ENCODE measurements at regions of chr19 and their contacts with region 1.

Region 1: DNA sequence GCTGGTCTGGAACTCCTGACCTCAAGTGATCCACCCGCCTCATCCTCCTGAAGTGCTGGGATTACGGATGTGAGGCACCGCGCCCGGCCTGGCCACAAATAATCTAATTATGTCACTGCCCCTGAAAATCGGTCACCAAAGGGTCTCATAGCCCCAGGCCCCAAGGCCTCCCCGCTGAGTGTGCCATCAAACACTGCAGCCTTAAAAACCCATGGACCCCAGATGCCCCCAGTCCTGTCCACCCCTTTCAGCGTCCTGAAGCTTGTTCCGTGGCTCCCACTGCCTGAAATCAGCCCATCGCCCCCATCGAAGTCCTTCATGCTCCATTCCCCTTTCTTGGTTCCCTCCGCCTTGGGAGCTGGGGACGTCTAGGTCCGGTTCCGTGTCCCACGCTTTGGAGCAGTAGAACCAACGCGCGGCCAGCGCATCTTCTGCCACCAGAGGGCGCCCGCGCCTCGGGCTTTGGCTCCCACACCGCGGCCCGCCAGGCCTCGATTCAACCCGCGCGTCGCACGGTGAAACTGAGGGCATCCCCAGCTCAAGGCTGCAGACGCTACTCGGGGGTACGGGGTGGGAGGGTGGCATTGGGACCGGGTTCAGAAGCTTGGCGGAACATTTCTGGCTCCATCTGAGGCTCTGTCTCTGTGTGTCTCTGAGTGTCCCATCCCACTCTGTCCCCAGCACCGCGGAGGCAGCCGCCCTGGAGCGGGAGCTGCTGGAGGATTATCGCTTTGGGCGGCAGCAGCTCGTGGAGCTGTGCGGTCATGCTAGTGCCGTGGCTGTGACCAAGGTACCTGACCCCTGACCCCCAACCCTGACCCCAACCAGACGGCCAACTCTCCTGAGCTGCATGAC is 3.5 kb downstream of the YJEFN3 start:
- DNase-seq: no peak
- H3K4me3 ChIP-seq: peak overlapping the region in 1 of 4 donors; percentile 19
- H3K27ac ChIP-seq: no peak overlapping the region
- H3K4me1 ChIP-seq: peaks cover 15 to 31% (median 24%) of the 10 kb centered on the region in 4 donors
- H3K27me3 ChIP-seq: peaks cover 0 to 5% (median 0%) of the 10 kb centered on the region in 4 donors
- CTCF ChIP-seq: peak; percentile 85 to 99 (median 93)
- EP300 ChIP-seq: no peak
- POLR2A ChIP-seq: no peak

Region 2: DNA sequence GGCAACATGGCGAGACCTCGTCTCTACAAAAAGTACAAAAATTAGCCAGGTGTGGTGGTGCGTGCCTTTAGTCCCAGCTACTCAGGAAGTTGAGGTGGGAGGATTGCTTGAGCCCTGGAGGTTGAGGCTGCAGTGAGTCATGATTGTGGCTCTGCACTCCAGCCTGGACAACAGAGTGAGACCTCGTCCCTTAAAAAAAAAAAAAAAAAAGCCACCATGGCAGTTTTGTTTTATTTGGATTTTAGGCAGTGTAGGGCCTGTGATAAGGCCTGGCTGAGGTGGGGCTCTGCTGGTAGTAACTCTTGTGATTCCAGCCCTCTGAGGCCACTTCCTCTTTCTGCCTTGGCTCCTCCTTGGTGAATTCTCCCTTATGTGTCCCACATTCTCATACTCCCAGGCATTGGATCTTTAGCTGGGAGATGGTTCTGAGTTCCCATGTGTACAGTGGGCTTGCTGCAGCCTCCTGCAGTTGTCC is 87.5 kb before region 1 on chr19:
- intact Hi-C with region 1: no loop called
- DNase-seq: no peak
- H3K4me3 ChIP-seq: no peak overlapping the region
- H3K27ac ChIP-seq: no peak overlapping the region
- H3K4me1 ChIP-seq: peaks cover 11 to 50% (median 21%) of the 10 kb centered on the region in 4 donors
- H3K27me3 ChIP-seq: no peaks in the 10 kb centered on the region
- CTCF ChIP-seq: no peak
- EP300 ChIP-seq: no peak
- POLR2A ChIP-seq: no peak

Region 3: DNA sequence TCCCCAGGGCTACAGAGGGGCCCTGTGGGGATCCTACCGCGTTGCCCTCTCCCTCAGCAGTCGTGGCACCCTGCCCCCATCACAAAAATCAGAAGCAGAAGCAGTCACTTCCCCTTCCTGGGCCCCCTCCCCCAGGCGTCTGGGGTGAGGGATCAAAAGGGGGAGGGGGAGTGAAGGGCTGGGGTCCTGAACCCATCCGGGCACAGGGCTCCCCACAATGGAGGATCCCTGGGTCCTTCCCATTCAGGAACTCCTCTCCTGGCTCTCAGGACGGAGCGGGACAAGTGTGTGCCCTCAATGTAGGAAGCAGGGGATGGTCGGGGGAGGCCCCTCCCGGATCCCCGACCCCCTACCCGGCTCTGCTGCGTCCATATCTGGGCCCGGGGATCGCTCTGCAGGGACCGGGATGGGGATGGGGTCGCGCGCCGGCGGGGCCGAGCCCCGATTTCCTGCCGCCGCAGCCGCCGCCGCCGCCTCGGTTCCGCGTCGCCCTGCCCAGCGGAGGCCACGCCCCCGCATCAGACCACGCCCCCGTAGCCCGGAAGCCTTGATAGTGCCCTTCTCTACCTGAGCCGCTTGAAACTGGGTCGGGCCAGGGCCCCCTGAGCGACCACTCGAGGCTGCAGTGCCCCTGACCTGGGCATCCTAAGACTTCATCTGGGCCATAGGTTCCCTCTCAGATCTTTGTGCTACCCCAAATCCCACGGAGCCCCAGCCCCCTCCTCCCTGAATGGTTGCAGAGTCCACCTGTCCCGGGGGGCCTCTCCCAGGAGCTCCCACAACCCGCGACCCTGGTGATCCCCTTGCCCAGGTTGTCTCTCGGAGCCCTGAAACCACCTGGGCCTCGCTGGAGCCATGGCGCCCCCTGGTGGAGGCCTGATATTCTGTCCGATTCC is 111.2 kb after region 1 on chr19 and contains the start of gene GMIP:
- intact Hi-C with region 1: loop called (anchors 2 kb)
- DNase-seq: peak; percentile 93
- H3K4me3 ChIP-seq: peak within 1 kb of the TSS; percentile 64 to 93 (median 75)
- H3K27ac ChIP-seq: peak within 1 kb of the TSS; percentile 42 to 57 (median 48)
- H3K4me1 ChIP-seq: peaks cover 15 to 20% (median 17%) of the 10 kb centered on the region in 4 donors
- H3K27me3 ChIP-seq: no peaks in the 10 kb centered on the region
- CTCF ChIP-seq: peak; percentile 70 to 86 (median 76)
- EP300 ChIP-seq: no peak
- POLR2A ChIP-seq: no peak
- total RNA-seq, gene GMIP: 6.9 to 15.9 (median 7.5) TPM

Region 4: DNA sequence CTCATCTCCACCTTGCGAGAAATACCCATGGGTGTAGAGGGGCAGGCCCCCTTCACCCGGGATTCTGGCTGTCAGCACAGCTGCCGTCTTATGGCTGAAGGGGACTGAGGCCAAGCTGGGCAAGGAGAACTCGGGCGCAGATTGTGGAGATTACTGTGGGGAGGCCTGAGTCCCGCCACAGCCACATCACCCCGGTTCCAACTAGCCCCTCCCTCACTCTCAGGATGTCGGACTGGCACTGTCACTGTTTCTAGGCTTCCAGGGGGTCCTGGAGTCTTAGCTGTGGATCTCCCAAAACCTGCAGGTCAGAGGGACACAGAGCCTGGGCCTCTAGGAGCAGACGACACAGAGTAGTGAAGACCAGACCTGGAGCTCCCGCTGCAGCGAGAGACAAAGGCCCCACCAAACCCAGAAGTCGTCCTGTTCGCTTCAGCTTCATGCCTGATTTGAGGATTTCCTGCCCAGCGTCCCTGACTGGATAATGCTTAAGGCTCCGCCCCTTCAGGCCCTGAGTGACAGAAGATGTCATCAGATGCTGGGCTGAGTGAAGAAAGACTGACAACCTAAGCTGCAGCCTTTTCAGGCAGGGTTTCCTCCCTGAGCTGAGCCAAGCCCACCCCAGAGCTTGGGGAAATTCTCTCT is 424.4 kb after region 1 on chr19:
- intact Hi-C with region 1: loop called (anchors 5 kb)
- DNase-seq: peak; percentile 85
- H3K4me3 ChIP-seq: no peak overlapping the region
- H3K27ac ChIP-seq: no peak overlapping the region
- H3K4me1 ChIP-seq: peaks cover 0 to 11% (median 4%) of the 10 kb centered on the region in 4 donors
- H3K27me3 ChIP-seq: peaks cover 0 to 4% (median 0%) of the 10 kb centered on the region in 4 donors
- CTCF ChIP-seq: no peak
- EP300 ChIP-seq: no peak
- POLR2A ChIP-seq: no peak

Measured in esophagus muscularis mucosa (tissue), 4 donors.